IMR-90 (cell line): ENCODE measurements at regions of chr21 and their contacts with region 1.

Region 1: GRCh38 chr21:39288987-39289386 is 24.4 kb downstream of the BRWD1 start:
- DNase-seq: no peak
- ATAC-seq: no peak
- H3K4me3 ChIP-seq: no peak overlapping the region
- H3K27ac ChIP-seq: no peak overlapping the region
- H3K4me1 ChIP-seq: no peaks in the 10 kb centered on the region
- H3K27me3 ChIP-seq: no peaks in the 10 kb centered on the region
- CTCF ChIP-seq: no peak
- POLR2A ChIP-seq: no peak
- RAD21 ChIP-seq: no peak

Region 2: GRCh38 chr21:38503583-38503982 is 785.4 kb before region 1 on chr21:
- CTCF ChIA-PET with region 1: no interaction called
- POLR2A ChIA-PET with region 1: no interaction called
- dilution Hi-C with region 1: no loop called
- in situ Hi-C with region 1: no loop called
- intact Hi-C with region 1: no loop called
- DNase-seq: peak; percentile 3
- ATAC-seq: no peak
- H3K4me3 ChIP-seq: no peak overlapping the region
- H3K27ac ChIP-seq: no peak overlapping the region
- H3K4me1 ChIP-seq: no peaks in the 10 kb centered on the region
- H3K27me3 ChIP-seq: peaks cover 22% of the 10 kb centered on the region
- CTCF ChIP-seq: no peak
- POLR2A ChIP-seq: no peak
- RAD21 ChIP-seq: no peak

Region 3: DNA sequence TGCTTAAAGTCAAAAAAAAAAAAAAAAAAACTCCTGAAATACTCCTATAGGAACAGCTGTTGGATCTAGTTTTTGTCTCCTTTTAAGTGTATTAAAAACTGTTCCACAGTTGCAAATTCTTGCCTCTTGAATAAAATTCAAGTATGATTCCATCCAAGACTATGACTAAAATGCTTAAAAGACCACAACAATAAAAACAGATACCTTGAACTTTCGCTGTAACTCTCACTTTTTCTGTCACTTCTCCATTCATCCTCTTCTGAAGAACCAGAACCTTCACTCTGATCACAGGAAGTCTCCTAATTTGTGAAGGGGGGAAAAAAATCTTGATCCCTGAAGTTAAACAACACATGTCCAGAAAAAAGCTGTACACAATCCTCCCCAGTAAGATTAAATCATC is 50.7 kb before region 1 on chr21:
- CTCF ChIA-PET with region 1: no interaction called
- POLR2A ChIA-PET with region 1: interaction called, 11 read pairs
- dilution Hi-C with region 1: no loop called
- in situ Hi-C with region 1: no loop called
- intact Hi-C with region 1: no loop called
- DNase-seq: no peak
- ATAC-seq: no peak
- H3K4me3 ChIP-seq: no peak overlapping the region
- H3K27ac ChIP-seq: no peak overlapping the region
- H3K4me1 ChIP-seq: no peaks in the 10 kb centered on the region
- H3K27me3 ChIP-seq: no peaks in the 10 kb centered on the region
- CTCF ChIP-seq: no peak
- POLR2A ChIP-seq: no peak
- RAD21 ChIP-seq: no peak

Region 4: DNA sequence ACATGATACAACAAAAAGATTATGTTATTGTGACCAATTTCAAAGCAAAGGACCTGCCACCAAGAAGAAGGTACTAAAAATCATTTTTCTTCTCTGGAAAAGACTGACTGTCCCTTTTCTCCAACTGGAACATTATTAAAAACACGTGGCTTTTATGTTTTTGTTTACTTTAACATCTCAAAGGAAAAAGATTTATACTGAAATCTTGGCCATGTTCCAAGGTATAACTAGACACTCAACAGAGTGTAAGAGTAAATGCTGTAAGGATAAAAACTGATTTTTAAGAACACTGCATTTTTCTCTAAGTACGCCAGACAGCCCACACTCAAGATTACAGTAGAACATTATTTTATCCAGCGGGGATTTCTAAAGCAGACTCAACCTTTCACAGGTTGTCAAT is 37.7 kb before region 1 on chr21:
- CTCF ChIA-PET with region 1: interaction called, 4 read pairs
- POLR2A ChIA-PET with region 1: no interaction called
- dilution Hi-C with region 1: no loop called
- in situ Hi-C with region 1: no loop called
- intact Hi-C with region 1: loop called (anchors 5 kb)
- DNase-seq: peak; percentile 24
- ATAC-seq: no peak
- H3K4me3 ChIP-seq: no peak overlapping the region
- H3K27ac ChIP-seq: no peak overlapping the region
- H3K4me1 ChIP-seq: no peaks in the 10 kb centered on the region
- H3K27me3 ChIP-seq: no peaks in the 10 kb centered on the region
- CTCF ChIP-seq: no peak
- POLR2A ChIP-seq: no peak
- RAD21 ChIP-seq: no peak

Region 5: DNA sequence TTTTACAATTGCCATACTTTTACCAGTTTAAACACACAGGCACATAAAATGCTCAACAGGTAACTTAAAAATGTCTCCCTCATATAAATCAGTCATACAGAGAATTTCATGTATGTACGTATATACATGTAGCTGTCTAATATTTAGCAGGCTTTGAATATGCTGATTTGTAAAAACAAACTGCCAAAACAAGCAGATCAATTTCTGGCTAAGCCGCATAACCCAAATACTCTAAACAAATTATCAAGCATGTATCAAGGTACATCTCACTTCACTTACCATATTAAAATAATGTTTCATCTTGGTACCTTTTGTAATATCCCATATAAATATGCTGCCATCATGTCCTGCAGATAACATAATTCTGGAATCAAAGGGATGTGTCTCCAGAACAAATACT is 19.4 kb before region 1 on chr21:
- CTCF ChIA-PET with region 1: no interaction called
- POLR2A ChIA-PET with region 1: interaction called, 9 read pairs
- dilution Hi-C with region 1: no loop called
- in situ Hi-C with region 1: no loop called
- intact Hi-C with region 1: loop called (anchors 2 kb)
- DNase-seq: no peak
- ATAC-seq: no peak
- H3K4me3 ChIP-seq: no peak overlapping the region
- H3K27ac ChIP-seq: no peak overlapping the region
- H3K4me1 ChIP-seq: no peaks in the 10 kb centered on the region
- H3K27me3 ChIP-seq: no peaks in the 10 kb centered on the region
- CTCF ChIP-seq: no peak
- POLR2A ChIP-seq: no peak
- RAD21 ChIP-seq: no peak